Colonic mucosa (tissue), 4 donors: ENCODE measurements at regions of chr17 and their contacts with region 1.

Region 1: DNA sequence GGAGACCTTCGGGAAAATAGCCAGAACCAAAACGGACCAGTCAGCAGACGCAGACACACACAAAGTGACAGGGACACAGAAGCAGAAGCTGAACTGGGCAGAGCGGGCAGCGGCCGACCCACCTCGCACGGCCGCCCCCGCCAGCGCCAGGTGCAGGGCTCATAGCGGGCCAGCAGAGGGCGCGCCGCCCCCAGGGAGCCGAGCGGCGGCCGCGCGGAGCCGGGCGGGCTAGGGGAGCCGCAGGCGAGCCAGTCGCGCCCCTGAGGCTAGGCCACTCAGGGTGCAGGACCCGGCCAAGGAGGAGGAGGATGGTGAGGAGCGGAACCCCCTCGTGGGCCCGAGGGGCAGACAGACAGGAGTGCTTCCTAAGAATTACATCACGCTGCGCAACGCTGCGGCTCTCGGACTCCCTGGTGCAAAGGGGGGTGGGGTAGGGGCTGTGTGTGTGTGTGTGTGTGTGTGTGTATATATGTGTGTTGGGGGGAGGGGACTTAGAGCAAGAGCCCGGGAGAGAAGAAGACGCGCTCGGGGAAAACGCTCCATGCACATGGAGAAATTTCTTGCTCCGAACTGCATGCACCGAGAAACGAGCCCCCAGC is 913 bp upstream of the NOG start:
- DNase-seq: peak; percentile 36
- H3K4me3 ChIP-seq: peak overlapping the region; percentile 48
- H3K27ac ChIP-seq: no peak overlapping the region
- H3K4me1 ChIP-seq: peaks cover 11% of the 10 kb centered on the region
- H3K27me3 ChIP-seq: peaks cover 43% of the 10 kb centered on the region
- CTCF ChIP-seq: peak; percentile 89

Region 2: GRCh38 chr17:56471696-56472095 is 120.9 kb before region 1 on chr17:
- intact Hi-C with region 1: no loop called
- DNase-seq: no peak
- H3K4me3 ChIP-seq: no peak overlapping the region
- H3K27ac ChIP-seq: no peak overlapping the region
- H3K4me1 ChIP-seq: no peaks in the 10 kb centered on the region
- H3K27me3 ChIP-seq: no peaks in the 10 kb centered on the region
- CTCF ChIP-seq: no peak

Region 3: DNA sequence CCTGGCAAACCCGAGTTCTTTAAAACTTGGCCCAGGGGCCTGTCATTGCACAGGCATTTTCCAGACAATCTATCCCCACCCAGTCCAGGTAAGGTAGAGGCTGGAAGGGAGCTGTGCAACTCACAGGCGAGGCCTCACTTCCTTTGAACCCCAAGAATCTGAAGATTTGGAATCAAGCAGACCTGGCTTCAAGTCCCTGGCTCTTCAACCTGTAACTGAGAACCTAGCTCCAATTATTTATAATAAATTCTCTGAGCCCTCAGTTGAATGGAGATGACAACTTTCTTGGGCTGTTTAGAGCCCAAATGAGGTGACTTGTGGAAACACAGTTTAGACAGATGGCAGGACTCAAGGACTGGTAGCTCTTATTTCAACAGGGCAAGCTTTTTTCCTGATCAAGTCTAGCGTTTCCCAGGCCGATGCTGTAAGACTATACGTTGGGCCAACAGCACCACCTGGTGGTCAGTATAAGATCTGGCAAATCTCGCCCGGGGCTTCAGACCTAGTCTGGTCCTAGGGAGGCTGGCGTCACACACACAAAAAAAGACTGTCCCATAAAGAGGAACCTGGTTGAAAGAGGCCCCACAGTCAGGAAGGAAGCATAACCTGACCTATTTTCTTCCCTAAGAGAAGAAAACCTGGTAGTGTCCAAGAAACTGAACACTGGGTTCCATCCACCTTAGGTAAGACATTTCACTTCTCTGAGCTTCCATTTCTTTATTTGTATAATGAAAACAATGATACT is 123.2 kb after region 1 on chr17:
- intact Hi-C with region 1: loop called (anchors 2 kb)
- DNase-seq: peak; percentile 77
- H3K4me3 ChIP-seq: no peak overlapping the region
- H3K27ac ChIP-seq: no peak overlapping the region
- H3K4me1 ChIP-seq: no peaks in the 10 kb centered on the region
- H3K27me3 ChIP-seq: no peaks in the 10 kb centered on the region
- CTCF ChIP-seq: peak; percentile 75

Region 4: DNA sequence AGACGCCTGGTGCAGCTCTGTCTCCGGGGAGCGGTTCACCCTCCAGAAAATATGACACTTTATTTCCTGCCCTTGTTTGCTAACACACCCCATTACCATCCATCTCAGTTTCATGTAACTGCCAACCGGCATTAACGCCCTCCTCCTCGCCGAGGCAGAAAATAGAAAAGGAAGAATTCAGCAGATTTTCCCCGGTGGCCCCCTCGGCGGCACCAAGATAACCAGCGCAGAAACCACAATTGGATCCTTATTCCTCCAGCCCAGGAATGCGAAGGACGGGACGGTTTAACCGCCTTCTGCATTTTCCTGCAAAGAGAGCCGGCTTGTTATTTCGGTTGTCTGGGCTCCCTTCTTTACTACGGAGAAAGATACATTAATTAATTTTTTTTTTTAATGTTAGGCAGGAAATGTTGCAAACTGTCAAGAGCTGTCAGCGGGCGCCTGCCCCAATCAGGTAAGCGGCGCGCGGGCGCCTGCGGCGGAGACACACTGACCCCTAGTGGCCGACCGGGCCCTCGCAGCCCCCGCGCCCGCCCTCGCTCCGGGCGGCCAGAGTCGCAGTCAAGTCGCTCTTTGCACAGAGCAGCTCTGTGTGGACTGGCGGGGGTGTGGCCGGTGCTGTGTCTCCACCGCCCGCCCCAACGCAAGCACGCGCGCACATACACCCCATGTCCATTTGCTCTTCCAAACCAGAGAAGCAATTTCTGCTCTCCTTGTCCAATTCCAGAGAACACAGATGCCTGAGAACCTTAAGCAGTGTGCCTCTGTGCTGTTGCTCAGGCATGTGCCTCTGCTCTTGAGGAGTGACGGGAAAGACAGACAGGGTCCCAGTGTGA is 187.5 kb after region 1 on chr17:
- intact Hi-C with region 1: loop called (anchors 5 kb)
- DNase-seq: peak; percentile 79
- H3K4me3 ChIP-seq: peak overlapping the region; percentile 6
- H3K27ac ChIP-seq: no peak overlapping the region
- H3K4me1 ChIP-seq: peaks cover 4% of the 10 kb centered on the region
- H3K27me3 ChIP-seq: no peaks in the 10 kb centered on the region
- CTCF ChIP-seq: peak; percentile 100

Region 5: DNA sequence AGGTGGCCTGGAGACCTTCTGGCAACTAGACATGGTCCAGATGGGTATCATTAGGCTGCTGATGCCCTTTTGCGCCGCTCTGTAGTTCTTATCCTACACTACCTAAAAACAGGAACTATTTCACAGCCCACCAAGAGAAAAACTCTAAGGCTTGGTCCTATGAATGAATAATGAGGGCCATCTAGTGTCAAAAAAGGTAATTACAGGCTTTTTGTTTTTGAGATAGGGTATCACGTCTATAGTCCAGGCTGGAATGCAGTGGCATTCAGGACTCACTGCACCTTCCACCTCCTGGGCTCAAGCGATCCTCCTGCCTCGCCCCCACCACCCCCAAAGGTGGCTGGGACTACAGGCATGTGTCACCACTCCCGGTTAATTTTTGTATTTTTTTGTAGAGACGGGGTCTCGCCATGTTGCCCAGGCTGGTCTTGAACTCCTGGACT is 347.3 kb after region 1 on chr17:
- intact Hi-C with region 1: loop called (anchors 10 kb)
- DNase-seq: no peak
- H3K4me3 ChIP-seq: no peak overlapping the region
- H3K27ac ChIP-seq: no peak overlapping the region
- H3K4me1 ChIP-seq: no peaks in the 10 kb centered on the region
- H3K27me3 ChIP-seq: no peaks in the 10 kb centered on the region
- CTCF ChIP-seq: peak; percentile 65